ENCODE measurements at regions of chr12 and their contacts with region 1.

Region 1: GRCh38 chr12:56189176-56189917 is at the start of gene SMARCC2:
- DNase-seq: peak; percentile 26
- ATAC-seq: peak; percentile 81
- H3K4me3 ChIP-seq: peak within 1 kb of the TSS; percentile 98
- H3K27ac ChIP-seq: peak within 1 kb of the TSS; percentile 91
- H3K4me1 ChIP-seq: 0 out of 2 replicates have a peak, but pooled peaks cover 4% of the 10 kb centered on the region
- H3K27me3 ChIP-seq: no peaks in the 10 kb centered on the region
- CTCF ChIP-seq: peak; percentile 68 to 87 (median 72); a peak in 5 of 6 replicates
- EP300 ChIP-seq: no peak
- POLR2A ChIP-seq: peak; percentile 79
- RAD21 ChIP-seq: peak; percentile 46
- polyA plus RNA-seq, gene SMARCC2: 13.6 to 27.8 TPM

Region 2: GRCh38 chr12:55624056-55624455 is 565.3 kb before region 1 on chr12:
- CTCF ChIA-PET with region 1: no interaction called
- POLR2A ChIA-PET with region 1: no interaction called
- RAD21 ChIA-PET with region 1: no interaction called
- SMC1A ChIA-PET with region 1: no interaction called
- in situ Hi-C with region 1: no loop called
- intact Hi-C with region 1: no loop called
- DNase-seq: peak; percentile 50
- ATAC-seq: peak; percentile 82
- H3K4me3 ChIP-seq: no peak overlapping the region
- H3K27ac ChIP-seq: no peak overlapping the region
- H3K4me1 ChIP-seq: no peaks in the 10 kb centered on the region
- H3K27me3 ChIP-seq: no peaks in the 10 kb centered on the region
- CTCF ChIP-seq: no peak
- EP300 ChIP-seq: peak; percentile 69 to 74; a peak in 3 of 4 replicates
- POLR2A ChIP-seq: no peak
- RAD21 ChIP-seq: no peak

Region 3: DNA sequence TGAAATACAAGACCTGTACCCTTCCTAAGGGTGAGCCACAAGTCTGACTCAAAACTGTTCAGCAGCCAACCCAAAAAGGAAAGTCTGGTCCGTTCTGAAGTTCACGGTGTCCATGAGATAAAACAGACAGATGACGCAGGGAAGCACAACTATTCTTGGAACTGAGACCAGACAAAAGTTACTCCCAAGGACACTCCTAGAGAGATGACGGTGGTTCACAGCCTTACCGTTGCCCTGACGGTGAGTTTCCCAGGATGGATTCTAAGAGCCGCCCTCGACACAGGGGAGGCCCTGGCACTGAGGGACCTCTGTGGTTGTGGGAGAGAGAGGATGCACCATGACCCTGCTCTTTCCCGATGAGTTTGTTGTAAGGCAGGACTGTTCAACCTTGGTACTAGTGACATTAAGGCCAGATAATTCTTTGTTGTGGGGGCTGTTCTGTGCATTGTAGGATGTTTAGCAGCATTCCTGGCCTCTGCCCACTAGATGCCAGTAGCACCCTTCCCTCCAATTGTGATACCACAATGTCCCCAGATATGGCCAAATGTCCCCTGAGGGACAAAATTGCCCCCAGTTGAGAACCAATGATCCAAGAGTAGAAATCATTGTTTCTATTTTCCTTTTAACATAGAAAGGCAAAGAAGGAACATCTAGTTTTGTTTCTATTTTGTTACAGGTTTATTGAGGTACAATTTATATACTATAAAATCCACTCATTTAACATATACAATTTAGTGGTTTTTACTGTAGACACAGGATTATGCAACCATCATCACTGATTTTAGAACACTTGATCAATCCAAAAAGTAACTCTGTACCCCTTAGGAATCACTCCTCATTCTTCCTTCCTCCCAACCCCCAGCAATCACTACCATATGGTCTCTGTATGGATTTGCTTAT is 529.6 kb before region 1 on chr12:
- CTCF ChIA-PET with region 1: no interaction called
- POLR2A ChIA-PET with region 1: no interaction called
- RAD21 ChIA-PET with region 1: no interaction called
- SMC1A ChIA-PET with region 1: no interaction called
- in situ Hi-C with region 1: no loop called
- intact Hi-C with region 1: no loop called
- DNase-seq: no peak
- ATAC-seq: peak; percentile 85
- H3K4me3 ChIP-seq: no peak overlapping the region
- H3K27ac ChIP-seq: no peak overlapping the region
- H3K4me1 ChIP-seq: no peaks in the 10 kb centered on the region
- H3K27me3 ChIP-seq: no peaks in the 10 kb centered on the region
- CTCF ChIP-seq: peak; percentile 50 to 66 (median 66)
- EP300 ChIP-seq: no peak
- POLR2A ChIP-seq: no peak
- RAD21 ChIP-seq: peak; percentile 84

Region 4: GRCh38 chr12:56041552-56042429 is 147.6 kb before region 1 on chr12 and contains the start of gene RPS26:
- CTCF ChIA-PET with region 1: interaction called, 10 read pairs
- POLR2A ChIA-PET with region 1: no interaction called
- RAD21 ChIA-PET with region 1: interaction called, 10 read pairs
- SMC1A ChIA-PET with region 1: interaction called, 3 read pairs
- in situ Hi-C with region 1: no loop called
- intact Hi-C with region 1: no loop called
- DNase-seq: peak; percentile 98
- ATAC-seq: peak; percentile 96
- H3K4me3 ChIP-seq: peak within 1 kb of the TSS; percentile 98
- H3K27ac ChIP-seq: peak within 1 kb of the TSS; percentile 98
- H3K4me1 ChIP-seq: peaks cover 13% of the 10 kb centered on the region
- H3K27me3 ChIP-seq: no peaks in the 10 kb centered on the region
- CTCF ChIP-seq: peak; percentile 46 to 64 (median 61)
- EP300 ChIP-seq: peak in 1 of 2 experiments; percentile 60; a peak in 2 of 4 replicates
- POLR2A ChIP-seq: peak; percentile 100
- RAD21 ChIP-seq: peak; percentile 85
- polyA plus RNA-seq, gene RPS26: 2,920 to 3,147 TPM

Region 5: DNA sequence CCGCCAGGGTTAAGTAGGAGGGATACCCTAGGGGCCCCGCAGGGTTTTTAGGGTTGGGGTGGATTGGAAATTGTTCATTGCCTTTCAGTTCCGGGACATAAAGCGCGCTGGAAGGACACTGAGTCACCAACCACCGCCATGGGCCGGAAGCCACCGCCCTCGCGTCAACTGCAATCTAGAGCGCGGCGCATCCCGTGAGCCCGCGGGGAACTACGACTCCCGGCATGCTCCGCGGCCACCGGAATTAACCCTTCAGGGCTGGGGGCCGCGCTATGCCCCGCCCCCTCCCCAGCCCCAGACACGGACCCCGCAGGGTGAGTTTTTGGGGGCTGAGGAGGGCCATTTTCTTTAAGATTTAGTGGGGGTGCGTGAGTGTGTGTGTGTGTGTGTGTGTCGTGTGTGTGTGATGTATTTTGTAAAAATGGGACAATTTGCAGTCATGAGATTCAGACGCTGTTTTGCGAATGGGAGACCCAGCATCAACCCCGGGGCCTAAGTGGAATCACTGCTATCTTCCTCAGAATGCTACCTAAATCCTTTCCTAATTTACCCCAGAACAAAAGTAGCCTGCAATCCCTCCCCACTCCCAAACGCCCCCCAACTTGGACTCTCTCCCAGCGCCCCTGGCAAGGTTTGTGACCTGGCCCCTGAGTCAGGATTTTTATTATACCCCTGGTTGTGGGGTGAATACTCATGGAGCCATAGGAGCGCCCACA is 36.9 kb before region 1 on chr12 and contains the start of gene MYL6B:
- CTCF ChIA-PET with region 1: interaction called, 6 read pairs
- POLR2A ChIA-PET with region 1: interaction called, 10 read pairs
- RAD21 ChIA-PET with region 1: interaction called, 7 read pairs
- SMC1A ChIA-PET with region 1: interaction called, 4 read pairs
- in situ Hi-C with region 1: no loop called
- intact Hi-C with region 1: no loop called
- DNase-seq: peak; percentile 66
- ATAC-seq: peak; percentile 94
- H3K4me3 ChIP-seq: peak within 1 kb of the TSS; percentile 84
- H3K27ac ChIP-seq: peak within 1 kb of the TSS; percentile 95
- H3K4me1 ChIP-seq: peaks cover 17% of the 10 kb centered on the region
- H3K27me3 ChIP-seq: no peaks in the 10 kb centered on the region
- CTCF ChIP-seq: no peak
- EP300 ChIP-seq: no peak
- POLR2A ChIP-seq: peak; percentile 93
- RAD21 ChIP-seq: no peak
- polyA plus RNA-seq, gene MYL6B: 117 to 153 TPM

Region 6: GRCh38 chr12:56224102-56224701 is 34.9 kb after region 1 on chr12 and contains the start of gene NABP2:
- CTCF ChIA-PET with region 1: interaction called, 74 read pairs
- POLR2A ChIA-PET with region 1: interaction called, 68 read pairs
- RAD21 ChIA-PET with region 1: interaction called, 32 read pairs
- SMC1A ChIA-PET with region 1: interaction called, 17 read pairs
- in situ Hi-C with region 1: no loop called
- intact Hi-C with region 1: loop called (anchors 1 kb)
- DNase-seq: peak; percentile 89
- ATAC-seq: peak; percentile 90
- H3K4me3 ChIP-seq: peak within 1 kb of the TSS; percentile 97
- H3K27ac ChIP-seq: peak within 1 kb of the TSS; percentile 65
- H3K4me1 ChIP-seq: 0 out of 2 replicates have a peak, but pooled peaks cover 3% of the 10 kb centered on the region
- H3K27me3 ChIP-seq: no peaks in the 10 kb centered on the region
- CTCF ChIP-seq: peak; percentile 65 to 86 (median 85)
- EP300 ChIP-seq: 0 out of 4 replicates have a peak, but pooled peaks of 1 of the 2 experiments have one; percentile 7
- POLR2A ChIP-seq: peak; percentile 78
- RAD21 ChIP-seq: peak; percentile 49; the same call in 1 of the 2 replicates
- polyA plus RNA-seq, gene NABP2: 20.7 to 29.5 TPM

Region 7: GRCh38 chr12:56299853-56300643 is 110.7 kb after region 1 on chr12 and contains the start of gene CS:
- CTCF ChIA-PET with region 1: interaction called, 7 read pairs
- POLR2A ChIA-PET with region 1: interaction called, 4 read pairs
- RAD21 ChIA-PET with region 1: no interaction called
- SMC1A ChIA-PET with region 1: interaction called, 4 read pairs
- in situ Hi-C with region 1: no loop called
- intact Hi-C with region 1: loop called (anchors 1 kb)
- DNase-seq: peak; percentile 71
- ATAC-seq: peak; percentile 95
- H3K4me3 ChIP-seq: peak within 1 kb of the TSS; percentile 93
- H3K27ac ChIP-seq: peak within 1 kb of the TSS; percentile 85
- H3K4me1 ChIP-seq: peaks cover 32% of the 10 kb centered on the region
- H3K27me3 ChIP-seq: no peaks in the 10 kb centered on the region
- CTCF ChIP-seq: no peak
- EP300 ChIP-seq: no peak
- POLR2A ChIP-seq: peak; percentile 84
- RAD21 ChIP-seq: no peak
- polyA plus RNA-seq, gene CS: 64.9 to 104 TPM

Region 8: GRCh38 chr12:56461235-56462159 is 272.1 kb after region 1 on chr12:
- CTCF ChIA-PET with region 1: interaction called, 15 read pairs
- POLR2A ChIA-PET with region 1: no interaction called
- RAD21 ChIA-PET with region 1: interaction called, 11 read pairs
- SMC1A ChIA-PET with region 1: interaction called, 9 read pairs
- in situ Hi-C with region 1: loop called (anchors 5 kb)
- intact Hi-C with region 1: loop called (anchors 1 kb)
- DNase-seq: no peak
- ATAC-seq: no peak; the same call in 2 of the 3 replicates
- H3K4me3 ChIP-seq: no peak overlapping the region
- H3K27ac ChIP-seq: no peak overlapping the region
- H3K4me1 ChIP-seq: peaks cover 10% of the 10 kb centered on the region
- H3K27me3 ChIP-seq: no peaks in the 10 kb centered on the region
- CTCF ChIP-seq: no peak
- EP300 ChIP-seq: no peak
- POLR2A ChIP-seq: no peak
- RAD21 ChIP-seq: no peak

Measured in GM12878 (cell line).